ENCODE measurements at regions of chr16 and their contacts with region 1.

Region 1: GRCh38 chr16:67017810-67018488 is 11.0 kb upstream of the CBFB start:
- DNase-seq: peak; percentile 83
- ATAC-seq: peak; percentile 83
- H3K4me3 Mint-ChIP-seq: no peak overlapping the region
- H3K27ac Mint-ChIP-seq: no peak overlapping the region
- H3K4me1 Mint-ChIP-seq: peaks cover 36% of the 10 kb centered on the region
- H3K27me3 Mint-ChIP-seq: peaks cover 6% of the 10 kb centered on the region

Region 2: GRCh38 chr16:66950437-66950836 is 67.5 kb before region 1 on chr16:
- POLR2A ChIA-PET with region 1: no interaction called
- DNase-seq: no peak
- ATAC-seq: no peak
- H3K4me3 Mint-ChIP-seq: no peak overlapping the region
- H3K27ac Mint-ChIP-seq: no peak overlapping the region
- H3K4me1 Mint-ChIP-seq: peaks cover 9% of the 10 kb centered on the region
- H3K27me3 Mint-ChIP-seq: peaks cover 48% of the 10 kb centered on the region

Region 3: DNA sequence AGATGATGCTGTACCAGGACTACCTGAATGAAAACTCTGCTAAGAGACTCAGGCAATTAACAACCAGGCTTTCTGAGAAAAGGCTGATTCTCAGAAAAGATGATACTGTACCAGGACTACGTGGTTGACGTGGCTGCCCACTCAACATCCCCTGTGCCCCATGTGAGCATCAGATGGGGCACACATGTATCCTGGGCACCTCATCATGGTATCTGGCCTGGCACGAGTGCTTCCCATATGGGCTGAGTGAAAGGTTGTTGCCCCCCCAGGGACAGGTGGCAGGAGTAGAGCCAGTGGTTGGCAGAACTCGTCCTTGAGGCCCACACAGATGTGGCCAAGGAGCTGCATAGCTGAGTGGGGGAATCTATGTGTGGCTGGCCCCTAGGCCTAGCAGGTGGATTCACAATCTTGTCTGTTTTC is 33.0 kb before region 1 on chr16:
- POLR2A ChIA-PET with region 1: interaction called, 86 read pairs
- DNase-seq: peak; percentile 71
- ATAC-seq: peak; percentile 93
- H3K4me3 Mint-ChIP-seq: peak overlapping the region; percentile 40
- H3K27ac Mint-ChIP-seq: peak overlapping the region; percentile 97
- H3K4me1 Mint-ChIP-seq: peaks cover 59% of the 10 kb centered on the region
- H3K27me3 Mint-ChIP-seq: no peaks in the 10 kb centered on the region

Region 4: DNA sequence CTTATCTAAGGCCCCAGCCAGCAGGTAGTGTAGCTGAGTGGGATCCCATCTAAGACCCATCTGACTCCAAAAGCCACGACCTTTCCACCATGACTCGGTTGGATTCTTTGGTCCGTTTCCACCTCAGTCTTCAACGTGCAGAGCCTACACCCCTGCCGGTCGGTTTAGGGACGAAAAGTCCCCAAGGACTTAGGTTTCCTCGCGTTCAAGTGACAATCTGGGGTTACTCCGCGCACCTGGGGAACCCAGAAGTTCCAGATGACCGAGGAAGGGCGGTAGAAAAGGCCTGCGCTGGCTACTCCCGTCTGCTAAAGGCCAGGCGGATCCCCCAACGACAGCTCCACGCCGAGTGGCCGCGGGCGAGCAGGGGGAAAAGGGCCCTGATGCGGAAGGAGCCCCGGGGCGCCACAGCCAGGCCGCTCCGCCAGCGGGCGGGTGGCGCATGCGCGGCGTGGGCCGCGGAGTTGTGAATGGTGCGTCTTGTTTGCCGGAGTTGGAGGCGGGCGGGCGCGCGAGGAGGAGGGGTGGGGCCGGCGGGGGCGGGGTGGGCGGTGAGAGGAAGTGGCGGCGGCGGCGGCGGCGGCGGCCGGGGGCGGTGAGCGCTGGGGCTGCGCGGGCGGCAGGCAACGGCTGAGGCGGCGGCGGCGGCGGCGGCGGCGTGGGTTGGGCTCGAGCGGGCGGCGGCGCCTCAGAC is 10.8 kb after region 1 on chr16 and contains the start of gene CBFB:
- POLR2A ChIA-PET with region 1: interaction called, 71 read pairs
- DNase-seq: peak; percentile 97
- ATAC-seq: peak; percentile 93
- H3K4me3 Mint-ChIP-seq: peak within 1 kb of the TSS; percentile 88
- H3K27ac Mint-ChIP-seq: peak within 1 kb of the TSS; percentile 92
- H3K4me1 Mint-ChIP-seq: peaks cover 44% of the 10 kb centered on the region
- H3K27me3 Mint-ChIP-seq: no peaks in the 10 kb centered on the region
- total RNA-seq, gene CBFB: 193 to 198 TPM

Region 5: DNA sequence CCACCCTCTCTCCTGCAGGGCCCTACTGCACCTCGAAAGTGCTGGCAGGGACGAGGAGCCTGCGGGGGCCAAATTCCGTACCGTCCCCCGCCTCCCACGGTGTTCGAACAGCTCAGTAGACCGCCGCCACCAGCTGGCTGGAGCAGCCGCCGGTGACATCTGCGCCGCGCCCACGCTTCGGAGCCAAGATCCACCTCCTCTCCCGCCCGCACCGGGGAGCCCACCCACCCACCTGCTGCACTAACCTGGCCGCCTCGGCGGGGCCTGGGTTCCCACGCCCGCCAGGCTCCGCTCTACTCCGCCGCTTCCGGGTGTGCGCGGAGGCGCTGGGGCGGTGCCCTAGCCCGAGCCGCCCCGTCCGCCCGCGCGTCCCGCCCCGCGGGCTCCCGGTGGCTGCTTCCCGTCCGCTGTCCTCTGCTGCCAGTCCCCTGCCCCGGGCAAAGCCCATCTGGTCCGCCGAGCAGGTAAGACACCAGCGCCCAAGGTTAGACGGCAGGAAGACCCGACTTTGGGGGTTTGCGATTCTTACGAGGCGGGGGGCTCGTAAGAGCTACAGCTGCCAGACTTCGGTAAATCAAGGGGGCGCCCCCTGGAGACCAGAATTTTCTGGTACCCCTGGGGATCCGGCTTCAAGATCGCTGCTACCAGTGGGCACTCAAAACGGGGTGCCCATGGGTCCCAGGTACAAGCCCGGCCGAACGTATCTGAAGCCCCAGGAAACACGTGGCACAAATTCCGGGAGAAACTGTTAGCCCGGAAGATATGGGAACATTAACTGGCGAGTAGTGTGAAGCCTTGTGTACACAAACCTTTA is 141.9 kb after region 1 on chr16 and contains the starts of genes FBXL8 and TRADD:
- POLR2A ChIA-PET with region 1: interaction called, 31 read pairs
- DNase-seq: peak; percentile 91
- ATAC-seq: peak; percentile 66
- H3K4me3 Mint-ChIP-seq: peak within 1 kb of the TSS; percentile 93
- H3K27ac Mint-ChIP-seq: peak within 1 kb of the TSS; percentile 92
- H3K4me1 Mint-ChIP-seq: peaks cover 44% of the 10 kb centered on the region
- H3K27me3 Mint-ChIP-seq: peaks cover 23% of the 10 kb centered on the region
- total RNA-seq, gene FBXL8: 34.1 to 41.3 TPM
- total RNA-seq, gene TRADD: 77.3 to 81.7 TPM

Measured in activated naive CD8-positive, alpha-beta T cell treated with anti-CD3 and anti-CD28 coated beads, Interleukin-2, amount 10 ng/mL, durations not matched to agents 7 days and 5 days (primary cell).